PC-3 (cell line): ENCODE measurements at regions of chr5 and their contacts with region 1.

Region 1: DNA sequence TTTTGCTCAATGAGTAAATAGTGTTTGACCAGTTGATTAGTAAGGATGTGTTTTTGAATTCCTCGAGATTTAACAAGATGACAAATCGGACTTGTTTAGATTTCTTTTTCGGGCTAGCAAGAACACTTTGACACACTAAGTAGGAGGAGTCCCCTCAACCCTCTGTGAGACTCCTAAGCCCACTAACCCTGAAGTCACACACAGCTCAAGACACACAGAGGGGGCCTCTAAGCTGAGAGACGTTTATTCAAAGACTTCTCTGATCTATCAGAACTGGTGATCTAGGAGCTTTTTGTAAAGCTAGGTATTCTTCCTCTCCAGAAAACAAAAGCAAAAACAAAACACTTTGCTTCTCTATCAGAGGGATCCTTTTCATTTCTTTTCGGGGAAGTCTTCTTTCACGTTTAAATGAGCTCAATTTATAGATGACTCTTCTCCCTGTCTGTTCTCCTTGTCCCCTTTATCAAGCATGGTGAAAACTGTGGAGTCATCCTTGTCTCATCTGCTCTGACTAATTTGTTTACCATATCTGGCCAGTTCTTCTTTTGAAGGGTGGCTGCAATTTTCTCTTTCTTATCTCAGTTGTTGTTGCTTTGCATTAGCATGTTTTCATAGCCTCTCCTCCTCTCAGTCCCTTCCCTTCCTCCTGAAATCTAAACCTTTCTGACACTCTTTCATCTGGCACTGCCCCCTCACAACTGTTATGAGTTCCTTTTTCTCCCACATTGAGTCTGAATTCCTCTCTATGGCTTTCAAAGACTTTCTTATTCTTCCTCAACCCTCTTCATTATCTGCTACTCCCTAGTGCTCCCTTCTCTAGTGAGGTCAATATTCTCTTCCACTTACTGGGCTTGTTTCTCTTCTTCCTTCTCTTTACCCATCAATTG is 68.5 kb upstream of the RAI14 start:
- DNase-seq: peak; percentile 76
- ATAC-seq: peak; percentile 6
- H3K4me3 ChIP-seq: peak overlapping the region; percentile 45
- H3K27ac ChIP-seq: peak overlapping the region; percentile 99
- H3K4me1 ChIP-seq: peaks cover 68% of the 10 kb centered on the region
- H3K27me3 ChIP-seq: no peaks in the 10 kb centered on the region
- CTCF ChIP-seq: no peak

Region 2: GRCh38 chr5:34538026-34538672 is 49.4 kb before region 1 on chr5:
- CTCF ChIA-PET with region 1: no interaction called
- POLR2A ChIA-PET with region 1: no interaction called
- intact Hi-C with region 1: loop called (anchors 2 kb)
- DNase-seq: peak; percentile 43
- ATAC-seq: no peak
- H3K4me3 ChIP-seq: no peak overlapping the region
- H3K27ac ChIP-seq: no peak overlapping the region; the same call in 1 of the 2 replicates
- H3K4me1 ChIP-seq: peaks cover 40% of the 10 kb centered on the region
- H3K27me3 ChIP-seq: no peaks in the 10 kb centered on the region
- CTCF ChIP-seq: peak; percentile 60

Region 3: DNA sequence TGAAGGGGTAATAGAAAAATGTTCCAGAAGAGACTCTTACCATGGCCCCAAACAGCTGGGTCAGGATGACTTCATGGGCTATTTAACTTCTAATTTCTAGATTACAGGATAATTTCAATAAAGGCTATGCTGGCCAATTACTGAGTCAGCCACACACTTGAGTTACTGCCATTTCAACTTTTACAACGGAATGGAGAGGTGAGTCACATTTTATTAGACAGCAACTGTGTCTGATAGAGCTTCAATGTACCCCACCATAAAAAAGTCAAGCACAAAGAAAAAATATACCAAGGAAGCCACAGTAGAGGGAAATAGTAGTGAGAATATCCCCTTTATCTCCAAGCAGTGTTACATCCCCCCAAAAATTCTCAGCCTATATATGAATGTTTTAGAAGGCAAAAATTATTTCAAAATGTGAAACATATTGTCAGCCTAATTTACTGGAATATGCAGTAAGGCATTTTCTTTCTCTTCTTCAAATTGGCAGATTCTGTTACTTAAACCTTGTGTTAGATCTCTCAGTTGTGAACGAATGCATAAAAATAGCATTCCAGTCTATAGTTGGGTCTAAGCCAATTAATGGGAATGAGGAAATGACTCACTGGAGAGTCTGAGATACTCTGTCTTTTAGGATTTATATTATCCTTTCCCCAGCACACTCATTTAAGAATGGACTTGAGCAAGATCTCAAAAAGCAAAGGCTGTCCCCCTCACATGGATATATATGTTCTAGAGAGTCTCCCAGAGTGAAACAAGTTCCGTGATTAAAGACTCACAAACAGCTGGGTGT is 21.5 kb after region 1 on chr5:
- CTCF ChIA-PET with region 1: no interaction called
- POLR2A ChIA-PET with region 1: interaction called, 4 read pairs
- intact Hi-C with region 1: loop called (anchors 1 kb)
- DNase-seq: peak; percentile 92
- ATAC-seq: peak; percentile 72
- H3K4me3 ChIP-seq: peak overlapping the region; percentile 19; the same call in 1 of the 2 replicates
- H3K27ac ChIP-seq: peak overlapping the region; percentile 95
- H3K4me1 ChIP-seq: peaks cover 43% of the 10 kb centered on the region
- H3K27me3 ChIP-seq: no peaks in the 10 kb centered on the region
- CTCF ChIP-seq: no peak

Region 4: DNA sequence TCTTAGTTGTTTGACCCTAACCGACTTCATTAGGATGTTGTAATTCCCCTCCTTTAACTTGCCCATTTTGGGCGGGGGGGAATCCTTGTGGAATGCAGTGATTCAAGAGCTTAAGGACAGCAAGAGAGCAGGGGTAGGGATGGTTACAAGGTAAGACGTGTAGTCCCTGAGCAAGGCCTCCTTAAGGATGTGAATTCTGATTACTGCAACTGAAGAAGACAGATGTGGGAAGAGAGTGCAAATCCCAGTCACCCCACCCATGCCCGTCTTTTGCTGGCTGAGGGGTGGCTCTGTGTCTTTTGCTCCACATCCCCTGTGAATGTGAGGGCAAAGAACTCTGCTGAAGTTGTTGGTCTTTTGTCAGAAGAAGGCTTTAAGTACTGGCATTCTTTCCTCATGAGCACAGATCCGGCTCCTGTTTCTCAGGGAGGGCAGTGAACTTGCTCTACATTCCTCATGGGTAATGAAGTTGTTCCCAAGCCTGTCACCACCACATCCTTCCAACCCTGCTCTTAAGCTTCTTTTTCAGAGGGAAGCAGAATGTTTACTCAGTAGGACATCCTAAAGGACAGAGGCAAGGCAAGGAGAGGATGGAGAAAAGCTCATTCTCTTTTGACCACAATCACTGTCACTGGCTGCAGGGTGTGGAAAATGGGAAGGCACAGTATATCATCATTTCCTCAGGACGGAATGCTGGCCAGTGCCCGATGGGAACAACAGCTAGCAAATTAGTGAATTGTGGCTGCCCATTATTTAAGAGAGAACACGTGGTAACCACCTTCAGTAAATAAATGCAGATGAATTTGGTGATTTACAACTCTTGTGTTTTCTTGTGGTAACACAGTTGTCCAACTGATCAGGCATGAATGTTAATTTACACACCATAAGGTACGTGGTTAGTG is 130.1 kb after region 1 on chr5:
- CTCF ChIA-PET with region 1: no interaction called
- POLR2A ChIA-PET with region 1: interaction called, 11 read pairs
- intact Hi-C with region 1: loop called (anchors 1 kb)
- DNase-seq: peak; percentile 97
- ATAC-seq: peak; percentile 88
- H3K4me3 ChIP-seq: peak overlapping the region; percentile 48; the same call in 1 of the 2 replicates
- H3K27ac ChIP-seq: peak overlapping the region; percentile 99
- H3K4me1 ChIP-seq: peaks cover 51% of the 10 kb centered on the region
- H3K27me3 ChIP-seq: no peaks in the 10 kb centered on the region
- CTCF ChIP-seq: no peak

Region 5: DNA sequence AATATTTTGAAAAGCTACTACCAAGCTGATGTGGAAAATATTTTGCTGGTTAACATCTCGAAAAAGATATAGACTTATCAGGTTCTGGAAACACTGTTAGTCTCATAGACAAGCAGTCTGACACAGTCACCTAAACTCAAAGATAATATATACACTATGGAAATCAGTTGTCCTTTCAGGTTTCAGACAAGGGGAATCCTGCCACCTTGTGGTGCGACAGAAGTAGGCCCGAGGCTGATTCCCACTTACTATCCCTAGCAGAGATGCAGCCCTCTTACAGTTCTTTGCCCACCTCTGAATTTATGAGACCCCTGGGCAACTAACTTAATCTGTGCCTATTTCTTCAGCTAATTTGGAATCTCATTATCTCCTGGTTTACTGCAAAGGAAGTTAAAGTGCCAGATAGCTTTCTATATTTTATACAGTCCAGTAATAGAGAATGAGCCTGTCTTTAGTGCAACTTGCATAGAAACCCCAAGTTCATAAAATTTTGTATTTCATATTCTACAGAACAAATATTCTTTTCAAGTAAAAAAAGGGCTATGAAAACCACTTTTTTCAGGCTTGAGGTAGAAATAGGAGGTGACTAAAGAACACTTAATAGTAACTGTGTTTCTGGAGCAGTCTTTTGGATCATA is 310.8 kb after region 1 on chr5:
- CTCF ChIA-PET with region 1: no interaction called
- POLR2A ChIA-PET with region 1: no interaction called
- intact Hi-C with region 1: loop called (anchors 2 kb)
- DNase-seq: peak; percentile 80
- ATAC-seq: peak; percentile 96
- H3K4me3 ChIP-seq: no peak overlapping the region
- H3K27ac ChIP-seq: no peak overlapping the region
- H3K4me1 ChIP-seq: peaks cover 14% of the 10 kb centered on the region
- H3K27me3 ChIP-seq: no peaks in the 10 kb centered on the region
- CTCF ChIP-seq: peak; percentile 93